Tibial artery (tissue), 4 donors: ENCODE measurements at regions of chr6 and their contacts with region 1.

Region 1: DNA sequence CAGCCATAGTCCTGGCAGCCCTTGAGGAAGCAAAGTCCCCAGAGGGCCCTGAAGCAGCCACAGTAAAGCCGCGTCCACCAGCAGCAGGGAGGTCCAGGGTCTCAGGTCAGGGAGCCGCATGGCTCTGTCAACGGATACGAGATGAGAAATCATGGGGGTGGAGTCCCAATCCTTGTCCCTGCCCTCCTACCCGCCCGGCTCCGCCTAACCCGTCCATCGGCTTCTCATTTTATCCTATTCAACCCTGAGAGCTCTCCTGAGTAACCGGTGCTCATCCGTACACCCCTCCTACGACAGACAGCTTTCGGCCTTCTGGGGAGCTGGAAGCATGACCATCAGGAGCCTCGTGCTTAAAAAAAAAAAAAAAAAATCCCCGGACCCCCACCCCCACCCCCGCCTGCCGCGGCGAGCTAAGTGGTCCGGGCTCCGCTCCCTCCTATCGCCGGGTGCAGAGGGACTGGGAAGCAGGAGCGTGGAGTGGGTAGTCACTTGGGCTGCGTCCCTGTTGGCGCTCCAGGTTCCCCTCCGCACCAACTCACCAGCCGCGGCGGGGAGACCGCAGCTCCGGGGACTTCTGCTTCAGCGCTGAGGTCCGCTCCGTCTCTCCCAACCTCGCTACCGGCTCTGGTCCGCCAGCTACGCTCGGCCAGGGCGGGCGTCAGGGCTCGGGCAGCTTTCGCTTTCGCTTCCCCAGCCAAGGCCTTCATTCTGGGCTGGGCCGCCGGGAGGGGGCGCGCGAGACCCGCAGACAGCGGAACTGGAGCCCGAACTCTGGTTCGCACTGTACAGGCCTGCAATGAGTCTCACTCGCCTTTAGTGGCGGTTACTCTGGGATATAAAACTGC is at the start of gene TAP2:
- DNase-seq: peak; percentile 95 to 97
- H3K4me3 ChIP-seq: peak within 1 kb of the TSS; percentile 88 to 90
- H3K27ac ChIP-seq: peak within 1 kb of the TSS; percentile 88 to 89
- H3K4me1 ChIP-seq: peaks cover 0 to 17% (median 11%) of the 10 kb centered on the region in 4 donors
- H3K27me3 ChIP-seq: no peaks in the 10 kb centered on the region
- CTCF ChIP-seq: peak; percentile 93 to 97

Region 2: DNA sequence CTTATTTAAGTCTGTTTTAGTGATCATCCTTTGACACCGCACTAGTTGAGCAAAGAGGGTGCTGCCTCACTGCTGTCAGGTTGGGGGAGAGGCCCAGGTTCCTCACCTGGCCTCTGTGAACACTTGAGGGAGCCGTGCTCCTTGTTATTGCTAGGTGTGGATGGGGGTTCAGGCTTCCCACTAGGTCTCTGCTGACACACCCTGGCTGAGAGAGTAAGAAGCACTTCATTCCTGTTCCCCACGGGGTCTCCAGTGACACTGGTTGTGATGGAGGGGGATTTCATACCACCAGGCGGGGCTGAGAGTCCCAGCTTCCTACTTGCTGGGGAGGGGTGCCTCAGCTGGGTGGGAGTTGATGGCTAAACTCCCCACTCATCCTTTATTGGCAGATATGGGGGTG is 603.4 kb before region 1 on chr6:
- intact Hi-C with region 1: no loop called
- DNase-seq: no peak
- H3K4me3 ChIP-seq: no peak overlapping the region
- H3K27ac ChIP-seq: no peak overlapping the region
- H3K4me1 ChIP-seq: no peaks in the 10 kb centered on the region
- H3K27me3 ChIP-seq: no peaks in the 10 kb centered on the region
- CTCF ChIP-seq: no peak

Region 3: DNA sequence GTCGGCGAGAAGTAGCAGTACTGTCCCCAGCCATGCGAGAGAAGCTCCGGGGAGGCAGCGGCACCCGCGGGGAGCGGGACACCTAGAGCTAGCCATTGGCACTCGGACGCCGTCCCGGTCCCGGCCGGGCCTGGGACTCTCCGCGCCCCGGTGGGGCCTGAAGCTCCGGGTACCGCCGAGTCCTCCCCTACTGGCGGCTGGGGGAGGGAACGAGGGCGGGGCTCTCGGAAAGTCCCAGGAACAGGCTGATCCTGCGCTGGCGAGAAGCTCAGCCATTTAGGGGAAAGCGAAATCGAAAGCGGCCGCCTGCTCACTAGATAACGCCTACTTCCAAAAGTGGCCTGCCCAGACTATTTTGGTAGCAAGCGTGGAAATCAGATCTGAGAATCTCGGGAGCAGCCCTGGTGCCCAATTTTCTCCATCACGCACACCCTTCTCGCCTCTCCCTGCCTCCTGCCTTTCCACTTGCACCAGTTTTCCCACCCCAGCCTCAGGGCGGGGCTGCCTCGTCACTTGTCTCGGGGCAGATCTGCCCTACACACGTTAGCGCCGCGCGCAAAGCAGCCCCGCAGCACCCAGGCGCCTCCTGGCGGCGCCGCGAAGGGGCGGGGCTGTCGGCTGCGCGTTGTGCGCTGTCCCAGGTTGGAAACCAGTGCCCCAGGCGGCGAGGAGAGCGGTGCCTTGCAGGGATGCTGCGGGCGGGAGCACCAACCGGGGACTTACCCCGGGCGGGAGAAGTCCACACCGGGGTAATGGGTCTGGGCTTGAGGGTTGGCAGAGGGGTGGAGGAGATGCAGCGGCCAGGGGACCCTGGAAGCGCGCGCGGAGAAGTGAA is 15.4 kb after region 1 on chr6 and contains the starts of genes PSMB9 and TAP1:
- intact Hi-C with region 1: loop called (anchors 2 kb)
- DNase-seq: peak; percentile 97 to 98
- H3K4me3 ChIP-seq: peak within 1 kb of the TSS; percentile 78 to 86
- H3K27ac ChIP-seq: peak within 1 kb of the TSS; percentile 92 to 96
- H3K4me1 ChIP-seq: peaks cover 0 to 21% (median 14%) of the 10 kb centered on the region in 4 donors
- H3K27me3 ChIP-seq: no peaks in the 10 kb centered on the region
- CTCF ChIP-seq: peak; percentile 75 to 76

Region 4: DNA sequence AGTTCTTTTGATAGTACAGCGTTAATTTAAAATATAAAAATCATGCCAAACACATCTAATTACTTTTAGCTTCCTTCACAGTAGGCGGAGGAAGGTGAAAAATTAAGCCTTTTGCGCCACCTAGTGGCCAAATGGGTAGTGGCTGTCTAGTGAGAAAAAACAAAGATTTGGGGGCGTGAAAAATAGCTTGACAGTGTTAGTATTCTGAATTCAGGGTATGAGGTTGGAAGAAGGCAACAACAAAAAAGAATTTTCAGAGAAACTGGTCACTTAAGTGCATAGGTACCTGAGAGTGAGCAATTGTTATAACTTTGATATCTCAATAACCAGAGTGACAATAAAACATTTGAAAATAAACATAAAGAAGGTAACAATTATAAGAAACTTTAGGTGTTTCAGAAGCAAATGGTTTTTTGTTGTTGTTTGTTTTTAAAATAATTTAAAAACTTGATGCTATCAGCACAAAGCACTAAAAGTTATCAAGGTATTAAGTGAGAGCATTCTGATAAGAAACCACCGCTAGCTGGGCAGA is 30.0 kb after region 1 on chr6:
- intact Hi-C with region 1: loop called (anchors 5 kb)
- DNase-seq: peak; percentile 71 to 83
- H3K4me3 ChIP-seq: no peak overlapping the region
- H3K27ac ChIP-seq: no peak overlapping the region
- H3K4me1 ChIP-seq: no peaks in the 10 kb centered on the region
- H3K27me3 ChIP-seq: peaks cover 0 to 11% of the 10 kb centered on the region in 2 donors
- CTCF ChIP-seq: peak; percentile 85 to 93

Region 5: GRCh38 chr6:32968093-32968866 is 129.9 kb after region 1 on chr6 and contains the start of gene BRD2:
- intact Hi-C with region 1: loop called (anchors 5 kb)
- DNase-seq: peak; percentile 95 to 98
- H3K4me3 ChIP-seq: peak within 1 kb of the TSS; percentile 90 to 94
- H3K27ac ChIP-seq: peak within 1 kb of the TSS; percentile 99
- H3K4me1 ChIP-seq: peaks cover 0 to 36% (median 12%) of the 10 kb centered on the region in 4 donors
- H3K27me3 ChIP-seq: no peaks in the 10 kb centered on the region
- CTCF ChIP-seq: no peak

Region 6: GRCh38 chr6:32984605-32985389 is 146.5 kb after region 1 on chr6:
- intact Hi-C with region 1: no loop called
- DNase-seq: peak; percentile 91 to 94
- H3K4me3 ChIP-seq: no peak overlapping the region
- H3K27ac ChIP-seq: no peak overlapping the region
- H3K4me1 ChIP-seq: peaks cover 0 to 4% (median 0%) of the 10 kb centered on the region in 4 donors
- H3K27me3 ChIP-seq: no peaks in the 10 kb centered on the region
- CTCF ChIP-seq: peak; percentile 86 to 89